ENCODE measurements at regions of chr1 and their contacts with region 1.

Region 1: DNA sequence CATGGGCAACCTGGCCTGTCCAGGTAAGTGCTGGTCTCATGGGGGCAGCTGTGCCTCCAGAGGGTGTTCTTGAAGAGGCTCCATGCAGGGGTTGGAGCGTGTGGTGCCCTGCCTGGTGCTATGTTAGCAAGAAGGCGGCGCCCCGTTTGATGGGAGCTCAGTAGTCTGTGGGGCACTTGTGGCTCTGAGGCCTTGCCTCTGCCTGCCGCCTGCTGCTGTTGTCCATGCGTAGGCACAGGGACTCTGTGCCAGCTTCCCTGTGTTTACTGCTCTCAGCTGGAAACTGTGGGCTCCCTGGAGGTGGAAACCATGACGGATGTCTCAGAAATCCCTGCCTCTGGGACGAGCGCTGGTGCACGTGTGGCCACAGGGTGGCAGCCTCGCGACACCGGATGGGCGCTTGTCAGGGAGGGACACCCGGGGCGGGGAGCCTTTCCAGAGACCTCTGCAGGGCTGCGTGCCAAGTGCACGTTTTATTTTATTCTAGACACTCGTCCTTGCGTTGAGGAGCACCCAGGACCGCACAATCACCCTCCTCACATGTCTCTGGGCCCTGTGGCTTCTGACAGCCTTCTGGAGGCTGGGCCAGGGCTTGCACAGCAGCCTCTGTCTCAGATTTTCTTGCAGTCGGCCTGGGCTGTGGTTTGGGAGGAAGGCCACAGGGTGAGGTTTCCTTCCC is 27.1 kb downstream of the SNAP47 start:
- DNase-seq: peak; percentile 97
- ATAC-seq: peak; percentile 64
- H3K4me3 Mint-ChIP-seq: peak overlapping the region; percentile 24
- H3K27ac Mint-ChIP-seq: peak overlapping the region; percentile 84
- H3K4me1 Mint-ChIP-seq: peaks cover 96% of the 10 kb centered on the region
- H3K27me3 Mint-ChIP-seq: no peaks in the 10 kb centered on the region

Region 2: GRCh38 chr1:227776331-227776771 is 14.0 kb after region 1 on chr1:
- CTCF ChIA-PET with region 1: interaction called, 59 read pairs
- DNase-seq: no peak
- ATAC-seq: no peak
- H3K4me3 Mint-ChIP-seq: no peak overlapping the region
- H3K27ac Mint-ChIP-seq: peak overlapping the region; percentile 28
- H3K4me1 Mint-ChIP-seq: peaks cover 46% of the 10 kb centered on the region
- H3K27me3 Mint-ChIP-seq: no peaks in the 10 kb centered on the region

Region 3: DNA sequence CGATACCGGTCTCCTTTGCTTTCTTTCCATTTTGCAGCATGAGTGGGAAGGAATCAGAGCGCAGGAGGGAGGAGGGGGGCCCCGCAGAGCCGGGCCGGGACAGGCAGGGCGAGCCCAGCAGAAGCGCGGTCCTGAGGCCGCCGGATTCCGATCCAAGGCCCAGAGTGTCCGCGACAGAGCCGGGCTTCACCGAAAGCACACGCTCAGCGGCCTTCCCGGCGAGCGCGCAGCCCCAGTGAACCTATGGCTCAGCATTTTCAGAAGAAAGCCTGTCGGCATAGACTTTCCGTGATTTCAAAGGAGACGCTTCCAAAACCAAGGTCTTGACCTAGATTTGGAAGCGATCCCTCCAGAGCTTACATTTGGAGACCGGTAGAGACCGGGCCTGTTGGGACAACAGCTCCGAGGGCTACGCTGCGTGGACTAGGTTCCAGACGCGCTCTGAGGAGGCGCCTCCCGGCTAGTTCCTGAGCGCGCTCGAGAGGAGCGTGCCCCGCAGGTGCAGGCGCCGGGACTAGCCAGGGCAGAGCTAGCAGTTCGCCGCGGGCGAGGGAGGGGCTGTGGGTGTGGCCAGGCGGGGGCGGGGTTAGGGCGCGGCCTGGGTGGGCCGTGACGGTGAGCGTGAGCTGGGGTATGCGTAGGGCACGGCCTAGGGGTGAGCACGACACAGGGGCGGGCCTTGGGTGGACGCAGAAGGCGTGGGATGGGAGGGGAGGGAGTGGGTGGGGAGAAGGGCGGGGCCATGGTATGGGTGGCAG is 25.3 kb after region 1 on chr1:
- CTCF ChIA-PET with region 1: interaction called, 18 read pairs
- DNase-seq: peak; percentile 97
- ATAC-seq: peak; percentile 94
- H3K4me3 Mint-ChIP-seq: peak overlapping the region; percentile 75
- H3K27ac Mint-ChIP-seq: peak overlapping the region; percentile 17
- H3K4me1 Mint-ChIP-seq: peaks cover 7% of the 10 kb centered on the region
- H3K27me3 Mint-ChIP-seq: peaks cover 14% of the 10 kb centered on the region

Region 4: DNA sequence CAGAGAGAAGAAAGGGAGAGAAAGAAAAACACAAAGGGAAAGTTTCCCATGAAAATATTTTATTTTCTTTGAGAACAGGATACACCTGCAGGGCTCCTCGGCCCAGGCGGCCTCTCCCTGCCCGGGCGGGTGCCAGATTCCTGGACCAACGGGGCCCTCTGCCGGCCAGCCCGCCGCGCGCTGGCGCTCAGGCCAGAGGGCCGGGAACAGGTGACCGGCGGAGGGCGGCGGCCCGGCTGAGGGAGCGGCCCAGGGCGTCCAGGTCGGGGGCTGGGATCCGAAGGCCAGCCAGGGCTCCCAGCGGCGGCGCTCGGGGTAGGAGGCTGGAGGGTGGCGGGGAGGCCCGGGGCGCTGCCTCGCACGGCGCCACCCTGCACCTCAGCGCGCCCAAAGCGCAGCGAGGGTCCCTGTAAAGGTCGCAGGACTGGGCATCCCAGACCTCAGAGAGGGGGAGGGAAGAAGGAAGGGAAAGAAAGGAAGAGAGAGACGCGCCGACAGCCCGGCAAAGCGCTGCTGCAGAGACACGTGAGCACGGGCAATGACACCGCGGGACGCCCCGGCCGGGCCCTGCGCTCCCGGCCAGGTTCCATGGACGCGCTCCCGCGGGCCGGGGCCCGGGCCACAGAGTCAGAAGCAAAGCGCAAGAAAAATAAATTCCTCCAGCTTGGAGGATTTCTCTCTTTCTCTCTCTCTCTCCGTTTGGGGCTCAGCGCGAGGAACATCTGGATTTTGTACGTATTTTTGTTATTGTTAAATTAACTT is 184.4 kb after region 1 on chr1:
- CTCF ChIA-PET with region 1: interaction called, 15 read pairs
- DNase-seq: peak; percentile 66
- ATAC-seq: peak; percentile 69
- H3K4me3 Mint-ChIP-seq: peak overlapping the region; percentile 60
- H3K27ac Mint-ChIP-seq: no peak overlapping the region
- H3K4me1 Mint-ChIP-seq: peaks cover 10% of the 10 kb centered on the region
- H3K27me3 Mint-ChIP-seq: peaks cover 23% of the 10 kb centered on the region

Region 5: GRCh38 chr1:227954163-227954850 is 191.9 kb after region 1 on chr1:
- CTCF ChIA-PET with region 1: interaction called, 15 read pairs
- DNase-seq: no peak
- ATAC-seq: no peak
- H3K4me3 Mint-ChIP-seq: no peak overlapping the region
- H3K27ac Mint-ChIP-seq: no peak overlapping the region
- H3K4me1 Mint-ChIP-seq: no peaks in the 10 kb centered on the region
- H3K27me3 Mint-ChIP-seq: peaks cover 44% of the 10 kb centered on the region

Measured in activated CD8-positive, alpha-beta memory T cell treated with anti-CD3 and anti-CD28 coated beads, Interleukin-2, amount 10 ng/mL, durations not matched to agents 7 days and 5 days (primary cell).